Cardiac septum (tissue), 1 donor: ENCODE measurements at regions of chr20 and their contacts with region 1.

Region 1: GRCh38 chr20:1965520-1966351 is 28.1 kb downstream of the PDYN start:
- DNase-seq: peak; percentile 84

Region 2: GRCh38 chr20:1707588-1708449 is 257.9 kb before region 1 on chr20:
- intact Hi-C with region 1: no loop called
- DNase-seq: no peak

Region 3: DNA sequence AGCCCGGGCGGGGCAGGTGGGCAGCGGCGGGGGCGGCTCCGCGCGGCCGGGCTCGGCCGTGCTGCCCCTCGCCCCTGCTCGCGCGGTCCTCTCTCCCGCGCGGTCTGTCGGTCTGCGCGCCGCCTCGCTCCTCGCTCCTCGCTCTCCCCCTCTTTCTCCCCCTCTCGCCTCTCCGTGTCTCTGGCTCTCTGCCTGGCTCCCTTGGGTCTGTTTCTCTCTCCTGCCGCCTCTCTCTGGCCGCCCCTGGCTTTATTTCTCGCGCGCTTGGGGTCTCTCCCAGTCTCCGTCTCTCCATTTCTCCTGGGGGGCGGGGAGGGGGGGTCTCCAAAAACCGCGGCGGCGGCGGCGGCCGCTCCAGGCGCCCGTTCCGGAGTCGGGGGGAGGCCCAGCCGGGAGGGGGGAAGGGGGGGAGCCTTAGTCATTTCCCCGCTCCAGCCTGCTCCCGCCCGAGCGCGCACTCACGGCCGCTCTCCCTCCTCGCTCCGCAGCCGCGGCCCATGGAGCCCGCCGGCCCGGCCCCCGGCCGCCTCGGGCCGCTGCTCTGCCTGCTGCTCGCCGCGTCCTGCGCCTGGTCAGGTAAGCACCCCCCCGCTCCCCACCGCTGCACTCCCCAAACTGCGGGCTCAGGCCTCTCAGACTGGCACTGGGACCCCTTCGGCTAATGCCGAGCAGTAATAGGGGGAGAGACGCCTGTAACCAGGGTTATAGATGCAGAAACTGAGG is 70.6 kb before region 1 on chr20 and contains the start of gene SIRPA:
- intact Hi-C with region 1: loop called (anchors 5 kb)
- DNase-seq: peak; percentile 88
- total RNA-seq, gene SIRPA: 45.8 TPM

Region 4: DNA sequence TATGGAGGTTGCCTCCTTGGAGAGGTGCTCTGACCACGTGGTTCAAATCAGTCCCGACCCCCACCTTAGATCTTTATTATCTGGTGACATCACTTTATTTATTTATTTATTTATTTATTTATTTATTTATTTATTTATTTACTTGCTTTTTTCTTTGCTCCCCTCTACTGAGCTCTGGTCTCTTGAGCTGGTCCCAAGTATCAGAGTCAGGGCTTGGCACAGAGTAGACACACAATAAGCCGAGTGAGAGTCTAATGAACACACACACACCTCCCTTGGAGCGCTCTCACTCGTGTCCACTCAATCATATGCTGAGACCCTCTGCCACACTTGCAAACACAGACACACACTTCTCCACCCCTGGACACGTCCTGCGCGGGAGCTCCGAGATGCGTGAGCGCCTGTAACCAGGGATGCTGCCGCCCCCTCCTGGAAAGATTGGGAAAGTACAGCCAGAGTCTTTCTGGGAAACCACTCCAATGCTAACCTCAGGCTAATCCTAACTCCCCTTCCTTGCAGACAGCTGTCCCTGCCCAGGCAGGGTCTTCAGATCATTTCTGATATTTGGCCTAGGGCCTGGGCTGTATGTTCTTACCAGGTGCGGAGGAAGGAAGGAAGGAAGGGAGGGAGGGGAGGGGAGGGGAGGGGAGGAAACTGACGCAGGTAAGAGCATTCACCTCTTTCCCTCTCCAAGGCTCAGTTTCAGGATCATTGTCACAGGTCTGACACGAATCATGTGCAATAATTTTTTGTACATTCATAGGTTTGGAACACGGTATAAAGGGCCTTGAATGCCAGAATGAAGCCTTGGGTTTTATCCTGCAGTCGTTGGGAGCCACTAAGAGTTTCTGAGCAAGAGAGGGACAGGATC is 206.8 kb after region 1 on chr20:
- intact Hi-C with region 1: loop called (anchors 2 kb)
- DNase-seq: peak; percentile 87

Region 5: DNA sequence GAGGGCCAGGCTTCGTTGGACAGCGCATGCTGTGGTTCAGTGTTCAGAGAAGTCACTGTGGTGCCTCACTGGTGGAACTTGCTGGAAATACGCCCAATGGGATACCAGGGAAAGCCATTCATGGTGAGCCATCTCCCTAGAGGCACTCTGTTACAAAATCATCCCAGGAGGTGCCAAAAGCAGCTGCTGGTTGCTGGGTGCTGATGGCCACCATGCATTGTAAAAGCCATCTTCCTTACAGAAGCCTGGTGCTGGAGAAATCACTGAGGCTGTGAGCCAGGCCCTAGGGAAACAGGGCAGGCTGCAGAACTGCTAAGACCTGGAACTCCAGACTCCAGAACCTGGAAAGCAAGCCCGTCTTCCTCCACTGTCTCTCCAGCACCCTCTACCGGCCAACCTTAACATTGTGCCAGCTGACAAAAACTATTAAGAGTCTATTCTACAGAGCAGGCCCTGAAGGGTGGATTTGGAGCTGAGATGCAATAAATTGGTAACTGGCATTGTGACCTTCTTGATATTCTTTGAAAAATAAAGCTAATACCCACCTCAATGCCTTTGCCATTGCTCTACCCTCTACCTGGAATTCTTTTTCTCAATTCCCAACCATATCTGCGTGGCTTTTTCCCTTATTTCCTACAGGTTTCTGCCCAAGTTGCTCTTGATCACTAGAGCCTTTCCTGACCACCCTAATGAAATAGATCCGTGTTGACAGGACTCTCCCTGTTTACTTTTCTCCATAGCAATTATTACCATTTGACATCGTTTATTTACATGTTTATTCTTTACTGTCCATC is 486.4 kb after region 1 on chr20:
- intact Hi-C with region 1: loop called (anchors 5 kb)
- DNase-seq: peak; percentile 80